ENCODE measurements at regions of chr2 and their contacts with region 1.

Region 1: GRCh38 chr2:191566344-191566743 is 111.6 kb upstream of the NABP1 start:
- DNase-seq: peak; percentile 55
- CTCF ChIP-seq: peak; percentile 65

Region 2: DNA sequence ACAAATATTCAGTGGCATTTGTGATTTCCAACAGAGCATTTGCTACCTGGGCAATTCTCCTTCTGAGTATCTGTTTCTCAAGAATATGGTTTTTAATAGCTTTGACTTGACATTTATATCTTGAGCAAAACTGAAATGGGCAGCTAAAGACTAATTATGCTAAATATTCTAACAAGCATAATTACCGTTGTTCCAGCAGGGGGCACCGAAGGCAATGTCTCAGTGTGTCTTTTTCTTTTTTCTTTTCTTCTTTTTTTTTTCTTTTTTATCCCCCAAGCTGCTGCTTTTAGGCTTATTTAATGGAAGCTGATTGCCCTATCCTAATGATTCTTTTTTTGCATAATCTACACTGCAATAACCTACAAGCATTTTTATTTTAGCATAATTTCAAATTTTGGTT is 27.3 kb before region 1 on chr2:
- CTCF ChIA-PET with region 1: no interaction called
- POLR2A ChIA-PET with region 1: no interaction called
- DNase-seq: peak; percentile 19
- CTCF ChIP-seq: peak; percentile 37

Region 3: GRCh38 chr2:191555092-191555742 is 11.1 kb before region 1 on chr2:
- CTCF ChIA-PET with region 1: interaction called, 49 read pairs
- POLR2A ChIA-PET with region 1: no interaction called
- DNase-seq: peak; percentile 77
- CTCF ChIP-seq: peak; percentile 78

Region 4: GRCh38 chr2:191582355-191582754 is 16.0 kb after region 1 on chr2:
- CTCF ChIA-PET with region 1: interaction called, 25 read pairs
- POLR2A ChIA-PET with region 1: no interaction called
- DNase-seq: no peak
- CTCF ChIP-seq: no peak

Region 5: DNA sequence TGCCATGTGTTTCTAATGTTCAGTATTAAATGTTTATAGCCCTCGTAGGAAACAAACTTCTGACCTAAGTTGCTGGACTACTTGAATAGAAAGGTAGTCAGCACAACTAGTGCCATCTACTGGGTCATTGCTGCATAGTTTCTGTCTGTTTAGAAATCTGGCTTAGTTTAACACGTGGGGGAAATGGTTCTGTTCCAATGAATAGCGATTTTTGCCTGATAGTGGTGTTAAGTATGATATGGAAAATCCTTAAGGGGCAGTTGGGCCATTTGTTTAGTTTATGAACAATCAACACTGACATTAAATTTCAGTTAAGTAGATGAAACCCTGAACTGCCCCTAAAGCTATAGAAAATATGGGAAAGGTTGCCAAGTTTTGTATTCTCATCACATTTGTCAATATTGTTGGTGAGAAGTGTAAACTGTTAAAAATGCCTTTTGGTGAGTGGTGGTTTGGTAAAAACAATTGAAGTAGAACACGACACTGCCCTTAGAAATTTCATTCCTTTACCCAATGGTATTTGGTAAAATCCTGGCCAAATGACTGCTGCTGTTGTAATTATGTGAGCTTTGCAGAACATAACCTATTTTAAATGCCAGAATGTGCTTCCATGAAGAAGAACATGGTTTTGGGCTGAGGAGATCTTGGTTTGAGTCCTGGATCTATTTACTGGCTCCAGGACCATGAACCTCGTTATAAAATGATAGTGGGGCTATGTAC is 124.8 kb after region 1 on chr2:
- CTCF ChIA-PET with region 1: interaction called, 25 read pairs
- POLR2A ChIA-PET with region 1: no interaction called
- DNase-seq: peak; percentile 69
- CTCF ChIP-seq: peak; percentile 61

Region 6: DNA sequence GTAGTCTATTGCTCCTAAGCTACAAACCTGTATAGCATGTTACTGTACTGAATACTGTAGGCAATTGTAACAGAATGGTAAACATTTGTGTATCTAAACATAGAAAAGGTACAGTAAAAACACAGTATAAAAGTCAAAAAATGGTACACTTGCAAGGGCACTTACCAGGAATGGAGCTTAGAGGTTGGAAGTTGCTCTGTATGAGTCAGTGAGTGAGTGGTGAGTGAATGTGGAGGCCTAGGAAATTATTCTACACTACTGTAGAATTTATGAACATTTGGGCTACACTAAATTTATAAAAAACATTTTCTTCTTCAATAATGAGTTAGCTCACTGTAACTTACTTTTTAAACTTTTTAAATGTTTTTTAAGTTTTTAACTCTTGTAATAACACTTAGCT is 130.6 kb after region 1 on chr2:
- CTCF ChIA-PET with region 1: interaction called, 25 read pairs
- POLR2A ChIA-PET with region 1: no interaction called
- DNase-seq: no peak
- CTCF ChIP-seq: no peak

Region 7: DNA sequence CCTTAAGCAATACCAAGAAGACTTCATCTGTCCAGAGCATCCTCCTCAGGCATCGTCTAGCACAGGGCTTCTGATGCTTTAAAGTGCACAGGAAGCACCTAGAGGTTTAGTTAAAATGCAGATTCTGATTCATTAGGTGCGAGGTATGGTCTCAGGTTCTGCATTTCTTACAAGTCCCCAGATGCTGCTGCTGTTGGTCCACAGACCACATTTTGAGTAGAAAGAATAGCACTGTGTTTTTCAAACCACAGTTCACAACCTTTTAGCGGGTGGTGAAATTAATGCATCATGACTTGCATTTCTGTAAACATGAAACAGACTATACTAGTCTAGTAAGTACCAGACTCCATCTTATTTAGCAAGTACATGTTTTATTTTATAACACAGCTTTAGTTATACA is 493.8 kb after region 1 on chr2:
- CTCF ChIA-PET with region 1: no interaction called
- POLR2A ChIA-PET with region 1: no interaction called
- DNase-seq: no peak
- CTCF ChIP-seq: no peak